ENCODE measurements at regions of chr1 and their contacts with region 1.

Region 1: GRCh38 chr1:174769961-174770549 is 229.7 kb upstream of the CACYBP start:
- DNase-seq: peak; percentile 71
- H3K4me3 ChIP-seq: no peak overlapping the region
- H3K27ac ChIP-seq: no peak overlapping the region
- H3K4me1 ChIP-seq: no peaks in the 10 kb centered on the region
- H3K27me3 ChIP-seq: no peaks in the 10 kb centered on the region
- CTCF ChIP-seq: peak; percentile 82

Region 2: DNA sequence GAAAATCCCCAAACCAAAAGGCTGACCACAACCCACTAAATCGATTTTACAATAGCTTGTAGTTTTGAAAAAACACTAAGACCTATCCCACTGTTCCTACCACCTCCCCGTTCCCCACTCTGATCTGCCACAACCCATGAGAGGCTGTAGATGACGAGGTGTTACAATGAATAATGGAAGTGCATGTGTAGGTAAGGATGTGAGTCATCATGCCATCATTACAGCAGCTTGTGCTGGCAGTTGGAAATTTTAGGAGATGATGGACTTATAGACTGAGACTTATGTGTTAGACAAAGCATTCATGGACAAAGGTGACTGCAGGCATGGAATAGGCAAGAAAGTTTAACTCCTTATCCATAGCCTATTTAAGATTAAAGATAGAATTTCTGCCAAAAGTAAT is 45.0 kb after region 1 on chr1:
- CTCF ChIA-PET with region 1: no interaction called
- POLR2A ChIA-PET with region 1: no interaction called
- intact Hi-C with region 1: no loop called
- DNase-seq: no peak
- H3K4me3 ChIP-seq: no peak overlapping the region
- H3K27ac ChIP-seq: no peak overlapping the region
- H3K4me1 ChIP-seq: peaks cover 4% of the 10 kb centered on the region
- H3K27me3 ChIP-seq: no peaks in the 10 kb centered on the region
- CTCF ChIP-seq: no peak

Region 3: DNA sequence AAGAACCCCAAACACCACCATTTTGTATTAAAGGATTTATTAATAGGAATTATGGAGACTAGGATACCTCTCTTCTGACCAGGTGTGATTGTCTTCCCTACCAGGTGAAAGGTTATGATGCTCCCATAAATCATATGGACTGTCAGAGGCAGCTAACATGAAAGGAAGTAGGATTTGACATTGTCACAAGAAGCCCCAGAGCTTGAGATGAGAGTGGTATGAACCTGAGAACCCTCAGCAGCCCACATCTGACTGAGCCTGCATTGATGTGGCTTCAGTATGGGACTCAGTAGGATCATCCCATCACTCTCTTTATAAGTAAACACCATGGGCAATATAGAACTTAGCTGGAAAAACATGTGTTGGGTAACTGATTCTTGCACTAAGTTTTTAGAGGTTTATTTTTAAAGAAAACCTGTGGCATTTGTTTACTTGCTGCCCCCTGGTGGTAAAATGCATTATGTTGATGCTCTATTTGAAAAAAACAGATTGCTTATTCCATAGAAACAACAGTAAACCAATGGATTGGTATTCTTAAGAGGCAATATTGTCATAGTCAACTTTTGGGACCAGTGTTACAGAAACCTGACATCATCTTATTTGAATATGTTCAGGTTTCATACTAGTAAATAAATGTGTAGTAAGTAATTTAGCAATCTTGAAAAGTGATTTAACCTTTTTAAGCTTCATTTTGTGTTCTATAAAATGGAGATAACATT is 213.1 kb after region 1 on chr1:
- CTCF ChIA-PET with region 1: no interaction called
- POLR2A ChIA-PET with region 1: no interaction called
- intact Hi-C with region 1: loop called (anchors 2 kb)
- DNase-seq: peak; percentile 64
- H3K4me3 ChIP-seq: no peak overlapping the region
- H3K27ac ChIP-seq: no peak overlapping the region
- H3K4me1 ChIP-seq: no peaks in the 10 kb centered on the region
- H3K27me3 ChIP-seq: no peaks in the 10 kb centered on the region
- CTCF ChIP-seq: peak; percentile 74

Region 4: GRCh38 chr1:174999216-174999925 is 229.3 kb after region 1 on chr1:
- CTCF ChIA-PET with region 1: no interaction called
- POLR2A ChIA-PET with region 1: no interaction called
- intact Hi-C with region 1: loop called (anchors 1 kb)
- DNase-seq: peak; percentile 99
- H3K4me3 ChIP-seq: peak overlapping the region; percentile 92
- H3K27ac ChIP-seq: peak overlapping the region; percentile 100
- H3K4me1 ChIP-seq: peaks cover 10% of the 10 kb centered on the region
- H3K27me3 ChIP-seq: no peaks in the 10 kb centered on the region
- CTCF ChIP-seq: no peak

Region 5: DNA sequence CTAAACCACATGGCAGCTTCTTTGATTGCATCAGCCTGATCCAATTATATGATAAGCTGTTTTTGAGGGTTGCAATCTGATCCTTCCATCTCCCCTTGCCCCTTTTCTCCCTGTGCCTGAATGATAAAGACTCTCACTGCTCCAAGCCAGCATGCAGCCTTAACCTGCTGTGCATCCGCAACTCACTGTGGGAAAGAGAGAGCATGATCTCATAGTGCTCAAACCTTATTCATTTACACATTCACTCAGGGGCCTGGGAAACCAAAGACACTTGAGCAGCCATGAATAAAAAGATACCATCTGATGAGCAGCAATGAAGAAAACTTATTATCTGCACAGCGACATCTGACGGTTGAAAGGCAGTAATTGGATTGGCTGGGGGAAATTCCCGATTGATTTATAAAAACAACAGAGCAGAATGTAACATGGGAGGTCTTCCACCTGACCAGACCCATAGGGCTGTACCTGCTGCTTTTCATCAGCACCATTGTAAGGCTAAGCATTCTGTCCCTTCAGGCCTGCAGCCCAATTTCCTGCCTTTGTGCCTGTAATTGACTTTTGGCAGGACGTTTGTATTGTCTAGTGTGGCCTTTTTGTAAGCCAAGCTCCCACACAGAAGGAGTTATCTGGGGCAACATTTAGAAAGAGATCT is 360.1 kb after region 1 on chr1:
- CTCF ChIA-PET with region 1: no interaction called
- POLR2A ChIA-PET with region 1: no interaction called
- intact Hi-C with region 1: loop called (anchors 10 kb)
- DNase-seq: peak; percentile 89
- H3K4me3 ChIP-seq: no peak overlapping the region
- H3K27ac ChIP-seq: peak overlapping the region; percentile 72
- H3K4me1 ChIP-seq: peaks cover 20% of the 10 kb centered on the region
- H3K27me3 ChIP-seq: peaks cover 3% of the 10 kb centered on the region
- CTCF ChIP-seq: peak; percentile 47; the same call in 1 of the 2 replicates